ENCODE measurements at regions of chr4 and their contacts with region 1.

Region 1: GRCh38 chr4:26916195-26916594 is 55.6 kb downstream of the STIM2 start:
- DNase-seq: no peak
- H3K4me3 ChIP-seq: no peak overlapping the region
- H3K4me3 Mint-ChIP-seq: peak overlapping the region in 4 of 8 donors; percentile 11 to 50 (median 28)
- H3K27ac ChIP-seq: no peak overlapping the region
- H3K27ac Mint-ChIP-seq: peak overlapping the region in 6 of 7 donors; percentile 17 to 78 (median 50)
- H3K4me1 ChIP-seq: peaks cover 55% of the 10 kb centered on the region
- H3K4me1 Mint-ChIP-seq: peaks cover 38 to 82% (median 57%) of the 10 kb centered on the region in 4 donors
- H3K27me3 ChIP-seq: no peaks in the 10 kb centered on the region
- H3K27me3 Mint-ChIP-seq: no peaks in the 10 kb centered on the region

Region 2: DNA sequence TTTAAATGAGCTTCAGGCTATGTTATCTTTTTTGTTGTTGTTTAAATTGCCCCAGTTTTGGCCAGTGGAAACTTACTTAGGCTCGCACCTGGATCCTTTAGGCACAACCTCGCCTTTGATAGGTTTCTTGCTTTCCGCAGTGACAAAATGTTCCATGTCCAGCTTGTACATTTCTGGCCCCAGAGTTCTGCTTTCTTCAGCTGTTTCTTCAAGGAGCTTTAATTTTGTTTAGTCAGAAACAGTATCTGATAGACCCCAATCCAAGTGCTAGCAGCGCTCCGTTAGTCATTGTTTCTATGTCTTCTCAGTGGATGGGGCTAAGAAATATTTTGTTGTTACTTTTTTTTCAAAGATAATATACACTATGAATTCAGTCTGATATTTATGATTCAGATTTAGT is 27.2 kb after region 1 on chr4:
- CTCF ChIA-PET with region 1: no interaction called
- POLR2A ChIA-PET with region 1: no interaction called
- intact Hi-C with region 1: loop called (anchors 1 kb)
- DNase-seq: no peak
- H3K4me3 ChIP-seq: no peak overlapping the region
- H3K4me3 Mint-ChIP-seq: no peak overlapping the region
- H3K27ac ChIP-seq: no peak overlapping the region
- H3K27ac Mint-ChIP-seq: no peak overlapping the region
- H3K4me1 ChIP-seq: peaks cover 47% of the 10 kb centered on the region
- H3K4me1 Mint-ChIP-seq: peaks cover 43 to 74% (median 54%) of the 10 kb centered on the region in 4 donors
- H3K27me3 ChIP-seq: no peaks in the 10 kb centered on the region
- H3K27me3 Mint-ChIP-seq: no peaks in the 10 kb centered on the region

Measured in CD4-positive, alpha-beta memory T cell (primary cell).